HEK293T (cell line): ENCODE measurements at regions of chr10 and their contacts with region 1.

Region 1: GRCh38 chr10:86755740-86756510 is 494 bp upstream of the BMPR1A start:
- DNase-seq: peak; percentile 93

Region 2: DNA sequence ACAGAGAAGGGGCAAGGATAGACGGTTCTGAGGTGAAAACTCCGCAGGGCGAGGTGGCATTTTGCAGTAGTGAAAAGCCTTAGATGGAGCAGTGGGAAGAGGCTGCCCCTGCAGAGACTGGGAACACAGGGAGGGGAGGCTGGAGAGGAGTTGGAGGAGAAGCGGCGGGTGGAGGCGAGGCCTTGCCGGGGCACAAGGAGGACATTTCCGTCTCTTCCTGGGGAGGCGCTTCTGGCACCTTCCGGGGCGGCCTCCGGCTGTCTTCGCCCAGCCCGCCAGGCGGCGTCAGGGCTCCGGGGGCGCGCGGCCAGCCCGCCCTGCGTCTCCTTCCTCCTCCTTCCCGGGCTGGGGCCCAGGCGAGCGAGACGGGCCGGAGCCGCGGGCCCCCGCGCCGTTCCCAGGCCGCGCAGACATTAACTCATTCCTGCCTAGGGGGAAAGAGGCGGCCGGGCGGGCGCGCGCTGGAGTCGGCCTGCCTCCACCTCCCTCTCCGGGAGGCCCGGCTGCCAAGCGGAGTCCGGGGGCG is 44.9 kb before region 1 on chr10:
- CTCF ChIA-PET with region 1: interaction called, 4 read pairs
- POLR2A ChIA-PET with region 1: interaction called, 62 read pairs
- DNase-seq: peak; percentile 91

Region 3: GRCh38 chr10:86733260-86733671 is 22.7 kb before region 1 on chr10:
- CTCF ChIA-PET with region 1: no interaction called
- POLR2A ChIA-PET with region 1: interaction called, 12 read pairs
- DNase-seq: no peak

Region 4: GRCh38 chr10:86770417-86770960 is 14.6 kb after region 1 on chr10:
- CTCF ChIA-PET with region 1: interaction called, 5 read pairs
- POLR2A ChIA-PET with region 1: interaction called, 17 read pairs
- DNase-seq: peak; percentile 33